ENCODE measurements at regions of chr3 and their contacts with region 1.

Region 1: GRCh38 chr3:155791190-155791589 is 14.9 kb downstream of the C3orf33 start:
- DNase-seq: no peak
- H3K4me3 ChIP-seq: no peak overlapping the region
- H3K27ac ChIP-seq: no peak overlapping the region
- H3K4me1 ChIP-seq: no peaks in the 10 kb centered on the region
- H3K27me3 ChIP-seq: no peaks in the 10 kb centered on the region
- CTCF ChIP-seq: no peak
- POLR2A ChIP-seq: no peak

Region 2: DNA sequence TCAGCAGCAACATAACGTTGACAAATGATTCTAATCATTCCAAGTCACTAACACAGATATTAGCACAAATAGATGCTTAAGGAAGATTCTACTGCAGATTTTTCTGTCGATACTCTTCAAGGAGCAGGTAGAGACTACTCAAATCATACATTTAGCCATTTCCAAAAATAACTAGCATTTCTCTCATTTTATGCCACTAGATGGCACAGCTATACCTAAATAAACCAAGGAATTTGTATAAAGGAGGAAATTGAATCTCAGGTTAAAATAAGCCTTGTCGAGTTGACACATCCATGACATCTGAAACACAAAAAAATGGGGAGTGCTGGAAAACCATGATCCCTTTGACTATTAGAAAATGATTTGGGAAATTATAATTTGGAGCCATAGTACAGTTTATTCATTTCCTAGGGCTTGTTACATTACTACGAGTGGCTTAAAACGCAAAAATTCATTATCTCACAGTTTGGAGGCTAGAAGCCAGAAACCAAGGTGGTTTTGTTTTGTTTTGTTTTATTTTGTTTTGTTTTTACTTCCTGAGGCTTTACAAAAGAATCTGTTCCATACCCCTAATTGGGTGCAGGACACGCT is 438.2 kb before region 1 on chr3:
- intact Hi-C with region 1: loop called (anchors 10 kb)
- DNase-seq: no peak
- H3K4me3 ChIP-seq: no peak overlapping the region
- H3K27ac ChIP-seq: no peak overlapping the region
- H3K4me1 ChIP-seq: no peaks in the 10 kb centered on the region
- H3K27me3 ChIP-seq: no peaks in the 10 kb centered on the region
- CTCF ChIP-seq: peak in 2 of 3 donors; percentile 48 to 58
- POLR2A ChIP-seq: no peak

Region 3: DNA sequence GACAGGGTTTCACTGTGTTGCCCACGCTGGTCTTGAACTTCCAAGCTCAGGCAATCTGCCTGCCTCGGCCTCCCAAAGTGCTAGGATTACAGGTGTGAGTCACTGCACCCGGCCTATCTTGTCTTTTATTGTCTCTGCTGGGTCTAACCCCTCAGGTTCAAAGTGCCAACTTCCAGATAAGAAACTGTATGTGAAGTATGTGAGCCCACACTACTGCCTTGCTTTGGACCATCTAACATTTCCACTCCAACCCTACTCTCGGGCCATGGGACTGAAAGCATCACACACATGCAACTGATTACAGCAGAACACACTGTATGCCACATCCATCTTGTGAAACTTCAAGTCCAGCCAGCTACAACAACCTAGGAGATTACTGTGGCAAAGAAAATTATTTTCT is 1968.1 kb after region 1 on chr3:
- intact Hi-C with region 1: no loop called
- DNase-seq: no peak
- H3K4me3 ChIP-seq: no peak overlapping the region
- H3K27ac ChIP-seq: no peak overlapping the region
- H3K4me1 ChIP-seq: no peaks in the 10 kb centered on the region
- H3K27me3 ChIP-seq: no peaks in the 10 kb centered on the region
- CTCF ChIP-seq: no peak
- POLR2A ChIP-seq: no peak

Measured in breast epithelium (tissue), 4 donors.